Left lung (tissue), 14 donors: ENCODE measurements at regions of chr12 and their contacts with region 1.

Region 1: DNA sequence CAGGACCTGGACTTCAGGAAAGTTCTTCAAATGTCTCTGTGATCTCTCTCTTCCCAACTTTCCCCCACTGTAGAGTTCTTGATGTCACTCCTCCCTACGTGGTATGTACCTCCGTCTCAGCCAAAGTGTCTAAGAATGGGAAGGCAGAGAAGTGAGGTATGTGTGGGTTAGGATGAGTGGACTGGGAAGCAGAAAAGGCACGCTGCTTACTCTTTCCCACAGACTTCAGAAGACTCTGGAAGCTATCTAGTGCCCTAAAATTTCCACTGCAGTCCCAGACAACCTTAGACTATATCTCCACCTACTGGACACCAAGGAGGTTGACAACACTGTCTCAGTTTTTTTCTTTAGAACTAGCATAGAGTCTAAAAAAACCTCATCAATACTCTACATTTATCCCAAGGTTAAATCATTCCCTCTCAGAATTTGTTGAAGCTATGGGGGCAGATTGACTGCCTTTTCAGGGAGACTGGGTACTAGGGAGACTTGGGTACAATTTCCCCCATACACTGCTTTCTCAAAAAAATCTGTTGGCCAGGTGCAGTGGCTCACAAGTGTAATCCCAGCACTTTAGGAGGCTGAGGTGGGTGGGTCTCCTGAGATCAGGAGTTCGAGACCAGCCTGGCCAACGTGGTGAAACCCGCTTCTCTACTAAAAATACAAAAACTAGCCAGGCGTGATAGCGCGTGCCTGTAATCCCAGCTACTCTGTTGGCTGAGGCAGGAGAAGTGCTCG is 20.6 kb upstream of the ITGA5 start:
- DNase-seq: peak in 2 of 4 donors; percentile 46 to 67
- ATAC-seq: peak; percentile 97
- H3K4me3 ChIP-seq: no peak overlapping the region
- H3K27ac ChIP-seq: no peak overlapping the region
- H3K4me1 ChIP-seq: peaks cover 0 to 12% of the 10 kb centered on the region in 2 donors
- H3K27me3 ChIP-seq: peaks cover 0 to 16% of the 10 kb centered on the region in 2 donors
- CTCF ChIP-seq: peak; percentile 71 to 82

Region 2: DNA sequence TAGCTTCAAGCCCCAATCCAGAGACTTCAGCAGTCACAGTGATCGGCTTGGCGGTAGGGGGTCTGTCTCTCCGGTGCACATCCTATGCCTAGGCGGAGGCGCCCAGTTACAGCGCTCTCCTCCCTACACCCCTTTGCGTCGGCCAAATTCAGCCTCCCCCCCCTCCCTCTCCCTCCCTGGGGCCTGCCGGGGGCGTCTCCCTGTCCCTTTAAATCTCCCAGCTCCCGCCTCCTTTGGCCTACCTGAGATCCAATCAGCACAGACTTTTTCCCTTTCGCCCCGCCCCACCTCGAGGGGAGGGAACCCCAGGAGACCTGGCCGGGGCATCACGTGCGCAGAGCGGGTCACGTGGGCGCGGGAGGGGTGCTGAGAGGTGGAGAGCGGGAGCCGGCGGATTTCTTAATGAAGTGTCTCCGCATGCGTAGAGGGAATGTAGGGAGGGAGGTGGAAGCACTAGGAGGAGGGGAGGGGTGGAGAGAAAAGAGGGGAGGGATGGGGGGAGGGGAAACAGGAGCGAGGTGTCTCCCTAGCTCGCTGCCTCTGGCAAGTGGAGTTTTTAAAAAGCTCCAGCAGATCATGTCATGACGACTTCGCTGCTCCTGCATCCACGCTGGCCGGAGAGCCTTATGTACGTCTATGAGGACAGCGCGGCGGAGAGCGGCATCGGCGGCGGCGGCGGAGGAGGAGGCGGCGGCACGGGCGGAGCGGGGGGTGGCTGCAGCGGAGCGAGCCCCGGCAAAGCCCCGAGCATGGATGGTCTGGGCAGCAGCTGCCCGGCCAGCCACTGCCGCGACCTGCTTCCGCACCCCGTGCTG is 501.2 kb before region 1 on chr12 and contains the start of gene HOXC13:
- intact Hi-C with region 1: no loop called
- DNase-seq: peak in 3 of 4 donors; percentile 36 to 72 (median 70)
- ATAC-seq: no peak
- H3K4me3 ChIP-seq: no peak within 1 kb of the TSS
- H3K27ac ChIP-seq: no peak within 1 kb of the TSS
- H3K4me1 ChIP-seq: no peaks in the 10 kb centered on the region
- H3K27me3 ChIP-seq: peaks cover 98 to 100% of the 10 kb centered on the region in 2 donors
- CTCF ChIP-seq: no peak
- polyA plus RNA-seq, gene HOXC13: not detected

Region 3: DNA sequence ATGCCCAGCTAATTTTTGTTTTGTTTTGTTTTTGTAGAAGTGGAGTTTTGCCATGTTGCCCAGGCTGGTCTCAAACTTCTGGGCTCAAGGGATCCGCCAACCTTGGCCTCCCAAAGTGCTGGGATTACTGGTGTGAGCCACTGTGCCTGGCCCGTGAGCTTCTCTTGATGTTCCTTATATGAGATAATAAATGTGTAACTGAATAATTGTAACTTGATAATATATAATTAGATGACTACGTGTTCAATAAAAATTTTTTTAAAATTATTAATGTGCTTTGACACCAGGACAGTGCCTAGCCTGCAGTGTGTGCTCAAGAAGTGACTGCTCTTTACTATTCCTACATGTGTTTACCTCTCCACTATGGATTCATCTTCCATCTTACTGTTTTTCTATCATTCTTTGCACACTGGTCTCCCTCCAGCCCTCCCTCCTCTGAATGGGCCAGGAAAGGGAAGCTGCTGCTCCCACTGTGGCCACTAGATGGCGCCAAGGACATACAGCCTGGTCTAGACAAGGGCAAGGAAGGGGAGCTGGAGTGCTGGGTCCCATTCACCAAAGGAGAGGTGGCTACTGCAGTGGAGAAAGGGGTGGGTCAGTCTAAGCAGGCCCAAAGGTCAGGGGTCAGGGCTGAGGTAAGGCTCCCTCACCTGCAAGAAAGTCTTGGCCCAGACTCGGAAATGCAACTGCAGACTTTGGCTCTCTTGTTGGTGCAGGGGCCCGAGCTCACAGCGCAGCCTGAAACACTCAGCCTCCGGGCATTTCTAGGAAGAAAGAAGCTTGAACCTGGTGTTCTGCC is 40.5 kb before region 1 on chr12:
- intact Hi-C with region 1: loop called in 1 of 2 experiments (anchors 2 kb)
- DNase-seq: peak; percentile 77 to 93 (median 86)
- ATAC-seq: peak; percentile 93
- H3K4me3 ChIP-seq: no peak overlapping the region
- H3K27ac ChIP-seq: no peak overlapping the region
- H3K4me1 ChIP-seq: peaks cover 0 to 5% of the 10 kb centered on the region in 2 donors
- H3K27me3 ChIP-seq: no peaks in the 10 kb centered on the region
- CTCF ChIP-seq: peak; percentile 96 to 99